ENCODE measurements at regions of chr1 and their contacts with region 1.

Region 1: GRCh38 chr1:178310685-178311105 is 186.1 kb downstream of the CLEC20A start:
- DNase-seq: no peak
- ATAC-seq: peak; percentile 80 to 83

Region 2: GRCh38 chr1:178037503-178038253 is 273.0 kb before region 1 on chr1:
- intact Hi-C with region 1: no loop called
- DNase-seq: peak; percentile 92
- ATAC-seq: peak; percentile 99

Region 3: DNA sequence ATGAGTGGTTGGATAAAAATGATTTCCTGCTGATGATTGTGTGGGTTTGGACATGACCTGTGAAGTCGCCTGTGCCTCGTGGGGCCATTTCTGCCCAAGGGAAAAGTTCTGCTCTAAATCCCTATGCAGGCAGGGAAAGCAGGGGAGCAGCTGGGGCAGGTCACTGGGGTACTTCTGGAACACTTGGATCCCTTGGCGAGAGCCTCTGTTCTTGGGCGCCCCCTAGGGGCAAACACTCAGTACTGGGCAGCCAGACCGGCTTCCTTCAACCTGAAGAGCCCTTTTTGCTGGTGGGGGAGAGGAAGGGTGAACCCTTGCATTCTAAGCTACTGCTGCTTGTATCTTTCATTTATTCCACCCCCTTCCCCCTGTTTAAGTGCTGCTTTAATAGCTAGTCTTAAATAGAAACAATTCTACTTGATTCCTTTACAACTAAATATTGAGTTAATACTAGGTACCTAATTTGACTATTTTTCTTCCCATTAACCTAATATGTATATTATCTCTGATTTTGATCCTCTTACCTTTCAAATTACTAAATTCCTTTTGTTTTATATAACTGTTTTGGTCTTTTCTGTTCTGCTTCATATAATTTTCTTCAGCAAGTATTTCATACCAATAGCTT is 191.1 kb after region 1 on chr1:
- intact Hi-C with region 1: loop called (anchors 10 kb)
- DNase-seq: peak; percentile 75
- ATAC-seq: peak; percentile 75 to 85

Region 4: GRCh38 chr1:178520783-178521182 is 210.1 kb after region 1 on chr1:
- intact Hi-C with region 1: loop called in 1 of 2 experiments (anchors 5 kb)
- DNase-seq: no peak
- ATAC-seq: no peak

Region 5: GRCh38 chr1:178739285-178740045 is 428.8 kb after region 1 on chr1:
- intact Hi-C with region 1: loop called in 1 of 2 experiments (anchors 10 kb)
- DNase-seq: no peak
- ATAC-seq: peak in 1 of 2 donors; percentile 21

Measured in left cardiac atrium (tissue), 4 donors.